ENCODE measurements at regions of chr2 and their contacts with region 1.

Region 1: DNA sequence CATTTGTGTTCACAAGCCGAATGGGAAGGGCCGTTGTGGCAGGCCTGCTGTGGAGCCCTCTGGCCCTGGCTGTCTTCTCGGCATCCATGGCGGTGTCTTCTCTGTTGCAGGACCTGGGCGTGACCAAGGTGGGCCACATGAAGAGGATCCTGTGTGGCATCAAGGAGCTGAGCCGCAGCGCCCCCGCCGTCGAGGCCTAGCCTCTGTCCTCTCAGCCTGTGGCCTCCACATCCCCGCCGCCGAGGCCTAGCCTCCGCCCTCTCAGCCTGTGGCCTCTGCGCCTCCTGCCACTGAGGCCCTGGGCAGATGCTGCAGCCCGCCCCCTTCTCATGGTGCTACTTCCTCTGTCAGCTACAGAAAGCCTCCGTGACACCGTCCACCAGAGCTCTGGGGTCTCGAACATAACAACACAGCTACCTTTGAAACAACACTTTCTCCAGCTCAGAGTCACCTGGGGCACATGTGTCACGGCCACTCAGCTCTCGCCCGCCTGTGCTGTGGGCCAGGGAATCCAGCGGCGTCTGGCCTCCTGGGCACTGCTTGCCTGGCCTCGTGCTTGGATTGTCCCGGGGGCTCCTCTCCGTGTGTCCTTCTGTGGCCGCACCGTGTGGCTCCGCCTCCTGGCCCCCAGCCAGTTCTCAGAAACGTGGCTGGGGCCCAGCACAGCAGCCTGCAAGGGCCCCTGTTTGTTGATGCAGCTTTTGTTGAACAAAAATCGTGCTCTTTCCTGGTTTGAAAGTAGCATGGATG is 97.1 kb downstream of the USP40 start:
- DNase-seq: peak in 1 of 2 donors; percentile 76
- ATAC-seq: peak; percentile 24 to 56
- H3K4me3 ChIP-seq: no peak overlapping the region
- H3K27ac ChIP-seq: peak overlapping the region; percentile 61 to 82 (median 72)
- H3K4me1 ChIP-seq: peaks cover 8 to 19% of the 10 kb centered on the region in 2 donors
- H3K27me3 ChIP-seq: no peaks in the 10 kb centered on the region
- CTCF ChIP-seq: no peak
- POLR2A ChIP-seq: no peak

Region 2: DNA sequence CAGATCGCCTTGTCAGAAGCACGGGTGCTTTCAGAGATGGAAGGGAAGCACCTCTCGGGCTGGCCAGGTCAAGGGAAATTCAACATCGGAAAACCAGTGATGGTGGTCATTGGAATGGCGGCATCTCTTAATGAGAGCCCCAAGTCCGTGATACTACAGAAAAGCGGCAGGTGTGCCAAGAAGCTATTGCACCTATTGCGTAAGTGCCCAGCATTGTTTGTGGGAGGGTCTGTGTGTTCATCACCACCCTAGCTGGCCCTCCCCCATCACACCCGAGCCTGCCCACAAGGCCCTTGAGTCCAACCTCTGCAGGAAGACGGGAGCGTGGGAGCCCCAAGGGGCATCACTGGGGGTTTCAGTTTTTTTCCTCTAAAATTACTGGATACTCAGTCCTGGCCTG is 14.4 kb before region 1 on chr2:
- in situ Hi-C with region 1: no loop called
- intact Hi-C with region 1: loop called (anchors 2 kb)
- DNase-seq: peak in 1 of 2 donors; percentile 14
- ATAC-seq: no peak
- H3K4me3 ChIP-seq: no peak overlapping the region
- H3K27ac ChIP-seq: peak overlapping the region in 1 of 4 donors; percentile 5
- H3K4me1 ChIP-seq: peaks cover 0 to 4% of the 10 kb centered on the region in 2 donors
- H3K27me3 ChIP-seq: no peaks in the 10 kb centered on the region
- CTCF ChIP-seq: no peak
- POLR2A ChIP-seq: no peak

Measured in gastrocnemius medialis (tissue), 4 donors.